ENCODE measurements at regions of chr5 and their contacts with region 1.

Region 1: DNA sequence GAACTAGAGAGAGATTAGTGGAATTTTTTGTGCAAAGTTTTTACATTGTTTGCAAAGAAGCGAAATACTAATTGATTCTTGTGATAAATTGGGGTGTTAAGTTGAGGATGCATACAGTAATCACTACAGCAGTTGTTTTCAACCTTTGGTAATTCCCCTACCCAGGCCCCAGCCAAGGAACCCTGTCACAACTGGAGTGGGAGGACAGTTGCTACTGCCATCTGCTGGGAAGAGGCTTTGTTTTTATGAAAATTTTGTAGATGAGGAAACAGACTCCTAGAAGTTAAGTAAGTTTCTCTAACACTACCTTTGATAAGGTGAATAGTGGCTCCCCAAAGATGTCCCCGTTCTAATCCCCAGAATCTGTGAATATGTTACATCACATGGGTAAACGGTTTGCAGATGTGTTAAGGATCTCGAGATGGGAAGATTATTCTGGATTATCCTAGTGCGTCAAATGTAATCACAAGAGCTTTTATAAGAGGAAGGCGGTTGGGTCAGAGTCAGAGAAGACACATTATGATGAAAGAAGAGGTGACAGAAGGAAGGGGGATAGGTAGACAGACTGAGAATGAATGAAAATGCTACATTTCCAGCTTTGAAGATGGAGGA is 34.0 kb upstream of the PPP1R2B start:
- ATAC-seq: peak in 3 of 8 experiments; percentile 44 to 56 (median 53)
- H3K4me3 ChIP-seq: no peak overlapping the region
- H3K27ac ChIP-seq: no peak overlapping the region
- H3K4me1 ChIP-seq: no peaks in the 10 kb centered on the region

Region 2: GRCh38 chr5:155943516-155944407 is 872.3 kb before region 1 on chr5:
- in situ Hi-C with region 1: loop called in 5 of 9 experiments (anchors 10 to 25 kb)
- ATAC-seq: peak; percentile 73 to 94 (median 87)
- H3K4me3 ChIP-seq: no peak overlapping the region
- H3K27ac ChIP-seq: no peak overlapping the region
- H3K4me1 ChIP-seq: peaks cover 0 to 4% of the 10 kb centered on the region in 2 donors

Region 3: GRCh38 chr5:155954701-155955445 is 861.2 kb before region 1 on chr5:
- in situ Hi-C with region 1: loop called in 1 of 9 experiments (anchors 25 kb)
- ATAC-seq: peak in 2 of 8 experiments; percentile 46 to 59
- H3K4me3 ChIP-seq: no peak overlapping the region
- H3K27ac ChIP-seq: no peak overlapping the region
- H3K4me1 ChIP-seq: peaks cover 8 to 14% of the 10 kb centered on the region in 2 donors

Region 4: GRCh38 chr5:156326718-156327259 is 489.3 kb before region 1 on chr5 and contains the start of gene SGCD:
- in situ Hi-C with region 1: loop called in 2 of 9 experiments (anchors 25 kb)
- ATAC-seq: peak in 5 of 8 experiments; percentile 44 to 91 (median 89)
- H3K4me3 ChIP-seq: no peak within 1 kb of the TSS
- H3K27ac ChIP-seq: no peak within 1 kb of the TSS
- H3K4me1 ChIP-seq: no peaks in the 10 kb centered on the region
- total RNA-seq, gene SGCD: 0.29 to 56.2 (median 7.9) TPM